Astrocyte of the cerebellum (primary cell): ENCODE measurements at regions of chr14 and their contacts with region 1.

Region 1: DNA sequence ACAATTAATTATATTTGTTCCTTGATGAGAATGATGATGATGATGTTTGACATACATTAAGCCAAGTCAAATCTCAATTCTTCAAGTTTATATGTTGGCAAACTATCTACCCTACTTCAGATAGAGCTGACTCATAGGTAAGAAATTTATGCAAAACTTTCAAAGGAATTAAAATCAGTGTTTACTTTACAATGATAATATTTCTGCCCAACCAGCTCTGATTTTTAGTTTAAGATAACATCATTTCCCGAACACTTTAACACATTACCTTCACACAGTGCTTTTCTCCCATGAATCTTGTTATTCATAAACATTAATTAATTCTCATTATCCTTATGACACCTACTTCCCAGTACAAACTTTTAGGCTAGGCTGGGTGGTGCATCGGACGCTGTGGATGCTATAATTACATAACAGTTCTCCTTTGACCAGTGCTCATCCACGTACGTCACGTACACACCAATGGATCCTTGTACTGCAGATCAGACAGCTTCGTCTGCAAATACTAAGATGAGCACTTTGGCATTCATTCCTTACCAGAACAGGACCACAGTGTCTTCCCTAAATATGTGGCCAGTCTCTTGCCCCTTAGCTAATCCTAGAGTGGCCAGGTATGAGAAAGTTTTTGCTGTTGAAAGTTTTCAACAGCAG is 18.3 kb downstream of the BMP4 start:
- DNase-seq: no peak
- H3K4me3 ChIP-seq: no peak overlapping the region
- CTCF ChIP-seq: no peak

Region 2: DNA sequence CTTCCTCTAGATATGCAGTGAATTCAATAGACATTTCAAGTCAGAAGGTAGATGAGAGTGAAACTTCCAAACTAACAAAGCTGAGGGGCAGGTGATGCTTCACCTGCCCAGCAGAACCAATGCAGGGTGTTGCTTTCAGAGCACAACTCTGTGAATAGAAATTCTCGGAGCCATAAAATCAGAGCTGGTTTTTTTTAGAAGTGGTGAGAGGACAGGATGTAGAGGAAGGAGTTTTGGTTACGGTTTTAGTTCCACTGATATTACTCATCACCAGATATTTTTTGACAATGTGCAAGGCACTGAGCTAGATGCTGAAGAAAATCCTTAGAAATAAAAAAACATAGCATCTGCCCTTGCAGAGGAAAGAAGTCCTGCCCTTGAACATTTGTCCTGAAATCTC is 43.9 kb before region 1 on chr14:
- in situ Hi-C with region 1: loop called (anchors 5 kb)
- DNase-seq: peak; percentile 74
- H3K4me3 ChIP-seq: no peak overlapping the region
- CTCF ChIP-seq: no peak